Heart right ventricle (tissue), 16 donors: ENCODE measurements at regions of chr1 and their contacts with region 1.

Region 1: GRCh38 chr1:87131809-87132283 is 196.8 kb upstream of the LMO4 start:
- DNase-seq: peak; percentile 81 to 84
- ATAC-seq: peak; percentile 87 to 95 (median 91)
- H3K4me3 ChIP-seq: peak overlapping the region; percentile 21 to 63 (median 50)
- H3K27ac ChIP-seq: peak overlapping the region; percentile 5 to 85 (median 68)
- H3K4me1 ChIP-seq: peaks cover 0 to 52% (median 22%) of the 10 kb centered on the region in 9 donors
- H3K27me3 ChIP-seq: peaks cover 0 to 9% (median 0%) of the 10 kb centered on the region in 7 donors
- CTCF ChIP-seq: peak; percentile 85 to 97 (median 93)

Region 2: DNA sequence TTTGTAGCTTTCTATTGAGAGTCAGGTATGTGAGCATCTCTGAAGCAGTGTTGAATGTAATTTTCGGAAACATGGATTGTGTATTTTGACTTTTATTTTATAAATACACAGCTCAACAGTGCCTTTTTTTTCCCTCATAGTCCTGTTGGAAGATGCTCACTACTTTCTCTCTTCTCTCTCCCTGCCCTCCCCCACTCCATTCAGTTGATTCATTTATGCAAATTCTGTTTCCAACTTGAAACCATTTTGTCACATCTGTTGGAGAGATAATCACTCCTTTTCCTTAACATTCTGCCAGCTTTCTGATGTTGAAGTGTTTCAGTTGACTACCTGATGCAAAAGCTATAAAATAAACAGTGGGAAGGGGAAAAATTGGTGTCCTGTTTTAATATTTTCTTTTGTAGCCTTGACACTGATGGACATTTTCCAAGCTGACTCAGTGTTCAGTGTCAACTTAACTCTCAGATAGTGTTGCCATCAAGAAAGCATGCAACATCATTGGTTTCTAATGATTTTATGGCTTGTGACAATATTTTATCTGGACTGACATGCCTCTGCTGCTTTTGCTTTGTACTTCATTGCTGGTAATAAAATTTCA is 22.9 kb before region 1 on chr1:
- intact Hi-C with region 1: no loop called
- DNase-seq: no peak
- ATAC-seq: no peak
- H3K4me3 ChIP-seq: no peak overlapping the region
- H3K27ac ChIP-seq: no peak overlapping the region
- H3K4me1 ChIP-seq: peaks cover 0 to 29% (median 0%) of the 10 kb centered on the region in 9 donors
- H3K27me3 ChIP-seq: no peaks in the 10 kb centered on the region
- CTCF ChIP-seq: no peak

Region 3: GRCh38 chr1:87279966-87280535 is 148.2 kb after region 1 on chr1:
- intact Hi-C with region 1: loop called in 4 of 10 experiments (anchors 5 to 10 kb)
- DNase-seq: no peak
- ATAC-seq: peak in 1 of 8 donors; percentile 17
- H3K4me3 ChIP-seq: no peak overlapping the region
- H3K27ac ChIP-seq: peak overlapping the region; percentile 28 to 78 (median 66)
- H3K4me1 ChIP-seq: peaks cover 0 to 25% (median 4%) of the 10 kb centered on the region in 9 donors
- H3K27me3 ChIP-seq: no peaks in the 10 kb centered on the region
- CTCF ChIP-seq: no peak

Region 4: DNA sequence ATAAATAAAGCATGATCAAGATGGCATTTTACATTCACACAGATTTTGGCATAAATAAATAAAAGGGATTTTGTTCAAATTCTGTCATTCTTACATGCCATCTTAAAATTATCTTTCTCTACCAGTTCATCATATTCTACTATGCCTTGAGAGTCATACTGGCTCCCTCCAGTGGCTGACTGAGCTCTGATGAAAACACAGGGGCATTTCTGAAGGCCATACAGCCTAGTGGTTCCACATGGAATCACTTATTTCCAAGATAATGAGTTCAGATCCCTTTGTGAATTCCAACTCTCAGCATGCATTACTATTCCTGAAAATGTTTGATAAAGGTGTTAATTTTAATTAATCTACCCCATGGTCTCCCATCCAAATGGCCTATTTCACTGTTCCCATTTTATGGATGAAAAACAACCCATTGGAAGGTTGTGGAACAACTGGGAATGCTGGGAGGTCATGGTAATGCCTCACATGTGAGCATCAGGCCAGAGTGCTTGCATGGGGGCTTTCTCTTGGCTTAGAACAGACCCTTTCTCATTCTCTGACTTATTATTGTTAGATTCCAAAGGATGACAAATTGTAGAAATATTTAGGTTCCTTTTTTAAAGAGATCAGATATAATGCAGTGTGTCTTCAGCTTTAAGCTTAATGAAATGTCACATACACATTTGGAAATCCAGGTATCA is 929.8 kb after region 1 on chr1:
- intact Hi-C with region 1: loop called in 1 of 10 experiments (anchors 10 kb)
- DNase-seq: peak in 1 of 2 donors; percentile 29
- ATAC-seq: peak in 6 of 8 donors; percentile 55 to 91 (median 60)
- H3K4me3 ChIP-seq: no peak overlapping the region
- H3K27ac ChIP-seq: no peak overlapping the region
- H3K4me1 ChIP-seq: no peaks in the 10 kb centered on the region
- H3K27me3 ChIP-seq: no peaks in the 10 kb centered on the region
- CTCF ChIP-seq: peak in 8 of 9 donors; percentile 44 to 71 (median 66)